ENCODE measurements at regions of chr10 and their contacts with region 1.

Region 1: GRCh38 chr10:92517034-92517655 is 56.7 kb downstream of the IDE start:
- DNase-seq: peak; percentile 26 to 90 (median 60)
- ATAC-seq: peak; percentile 98
- H3K4me3 ChIP-seq: no peak overlapping the region
- H3K4me3 Mint-ChIP-seq: no peak overlapping the region
- H3K27ac ChIP-seq: no peak overlapping the region
- H3K27ac Mint-ChIP-seq: no peak overlapping the region
- H3K4me1 ChIP-seq: no peaks in the 10 kb centered on the region
- H3K4me1 Mint-ChIP-seq: peaks cover 10% of the 10 kb centered on the region
- H3K27me3 ChIP-seq: no peaks in the 10 kb centered on the region
- H3K27me3 Mint-ChIP-seq: no peaks in the 10 kb centered on the region
- CTCF ChIP-seq: peak; percentile 77

Region 2: DNA sequence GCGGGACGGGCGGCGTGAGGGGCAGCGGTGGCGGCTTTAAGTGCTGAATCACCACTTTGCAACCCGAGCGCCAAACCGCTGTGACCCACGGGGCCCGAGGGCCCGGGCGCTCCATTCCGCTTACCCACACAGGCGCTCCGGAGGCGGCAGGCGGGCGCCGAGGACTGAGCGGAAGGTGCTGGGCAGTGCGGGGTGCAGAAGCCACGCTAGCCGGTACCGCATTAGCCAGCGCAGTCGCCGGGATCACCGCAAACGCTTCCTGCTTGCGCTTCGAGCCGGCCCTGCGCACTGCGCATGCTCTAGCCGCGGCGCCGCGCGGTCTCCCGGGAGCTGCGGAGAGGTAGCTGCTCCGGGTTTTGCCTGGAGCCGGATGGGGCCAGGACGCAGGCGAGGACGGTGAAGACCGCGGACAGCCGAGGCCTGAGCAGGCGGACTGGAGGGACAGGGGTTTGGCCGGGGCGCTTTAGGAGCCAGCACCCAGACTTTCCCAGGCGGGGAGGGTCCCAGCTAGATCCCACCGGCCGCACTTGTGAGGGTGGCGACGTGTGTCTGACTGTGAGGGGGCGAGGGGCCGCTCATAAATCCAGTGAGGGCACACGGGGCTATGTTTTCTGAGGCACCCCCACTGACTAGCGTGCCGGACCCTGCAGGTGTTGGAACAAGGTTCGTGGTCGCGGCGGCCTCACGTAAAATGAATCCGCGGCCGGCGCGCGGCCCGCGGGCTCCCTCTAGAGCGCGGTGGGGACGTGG is 56.8 kb after region 1 on chr10 and contains the start of gene IDE:
- CTCF ChIA-PET with region 1: interaction called, 108 read pairs
- POLR2A ChIA-PET with region 1: interaction called, 43 read pairs
- intact Hi-C with region 1: loop called (anchors 1 kb)
- DNase-seq: peak; percentile 64 to 91 (median 76)
- ATAC-seq: peak; percentile 73
- H3K4me3 ChIP-seq: peak within 1 kb of the TSS; percentile 96
- H3K4me3 Mint-ChIP-seq: peak within 1 kb of the TSS; percentile 93
- H3K27ac ChIP-seq: peak within 1 kb of the TSS; percentile 77
- H3K27ac Mint-ChIP-seq: peak within 1 kb of the TSS; percentile 88
- H3K4me1 ChIP-seq: peaks cover 19% of the 10 kb centered on the region
- H3K4me1 Mint-ChIP-seq: peaks cover 40% of the 10 kb centered on the region
- H3K27me3 ChIP-seq: no peaks in the 10 kb centered on the region
- H3K27me3 Mint-ChIP-seq: no peaks in the 10 kb centered on the region
- CTCF ChIP-seq: peak; percentile 91
- total RNA-seq, gene IDE: 15.2 to 17.8 TPM

Region 3: DNA sequence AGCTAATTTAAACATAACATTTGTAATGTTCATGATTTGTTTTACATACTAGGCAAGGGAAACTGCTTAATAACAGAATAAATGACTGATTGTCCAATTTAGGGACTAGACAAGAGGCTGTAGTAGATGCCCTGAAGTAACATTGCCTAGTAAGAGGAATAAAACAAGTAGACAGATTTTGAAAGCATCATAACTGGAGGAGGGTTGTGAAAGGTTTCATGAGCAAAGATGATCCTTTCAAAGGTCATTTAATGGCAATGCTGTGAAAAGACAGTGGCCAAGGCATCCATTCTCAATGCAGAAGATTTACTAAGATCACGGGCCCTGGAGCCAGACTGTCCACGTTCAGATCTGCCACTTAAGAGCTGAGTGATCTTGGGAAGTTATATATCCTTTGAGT is 127.8 kb after region 1 on chr10:
- CTCF ChIA-PET with region 1: interaction called, 3 read pairs
- POLR2A ChIA-PET with region 1: no interaction called
- intact Hi-C with region 1: loop called in 1 of 2 experiments (anchors 2 kb)
- DNase-seq: no peak
- ATAC-seq: no peak
- H3K4me3 ChIP-seq: no peak overlapping the region
- H3K4me3 Mint-ChIP-seq: no peak overlapping the region
- H3K27ac ChIP-seq: no peak overlapping the region
- H3K27ac Mint-ChIP-seq: no peak overlapping the region
- H3K4me1 ChIP-seq: no peaks in the 10 kb centered on the region
- H3K4me1 Mint-ChIP-seq: no peaks in the 10 kb centered on the region
- H3K27me3 ChIP-seq: no peaks in the 10 kb centered on the region
- H3K27me3 Mint-ChIP-seq: no peaks in the 10 kb centered on the region
- CTCF ChIP-seq: peak; percentile 9

Region 4: DNA sequence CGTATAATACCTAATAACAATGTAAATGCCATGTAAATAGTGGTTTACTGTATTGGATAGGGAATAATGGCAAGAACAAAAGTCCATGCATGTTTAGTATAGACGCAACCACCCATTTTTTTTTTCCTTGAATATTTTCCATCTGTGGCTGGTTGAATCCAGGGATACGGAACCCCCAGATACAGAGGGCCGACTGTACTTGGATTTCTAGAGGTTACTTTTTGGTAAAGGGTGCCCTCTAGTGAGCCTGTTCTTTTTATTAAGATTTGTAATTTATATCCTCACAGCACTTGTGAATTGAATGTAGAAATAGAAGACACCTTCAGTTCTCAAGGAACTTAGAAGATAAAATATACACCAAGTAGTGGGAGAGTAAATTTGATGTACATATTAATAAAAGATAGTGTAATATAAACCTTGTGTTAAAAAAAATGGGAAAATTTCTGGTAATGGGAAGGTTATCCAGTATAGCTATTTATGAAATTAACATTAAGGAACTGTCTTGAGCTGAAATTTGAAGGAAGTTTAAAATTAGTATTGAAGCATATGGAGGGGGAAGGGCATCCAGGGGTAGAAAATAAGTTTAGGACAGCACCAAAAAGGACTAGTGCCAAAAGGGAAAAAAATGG is 363.2 kb after region 1 on chr10:
- CTCF ChIA-PET with region 1: no interaction called
- POLR2A ChIA-PET with region 1: no interaction called
- intact Hi-C with region 1: loop called (anchors 1 to 2 kb)
- DNase-seq: peak in 4 of 14 experiments; percentile 13 to 56 (median 56)
- ATAC-seq: peak; percentile 39
- H3K4me3 ChIP-seq: no peak overlapping the region
- H3K4me3 Mint-ChIP-seq: no peak overlapping the region
- H3K27ac ChIP-seq: no peak overlapping the region
- H3K27ac Mint-ChIP-seq: no peak overlapping the region
- H3K4me1 ChIP-seq: peaks cover 5% of the 10 kb centered on the region
- H3K4me1 Mint-ChIP-seq: peaks cover 29% of the 10 kb centered on the region
- H3K27me3 ChIP-seq: no peaks in the 10 kb centered on the region
- H3K27me3 Mint-ChIP-seq: no peaks in the 10 kb centered on the region
- CTCF ChIP-seq: peak; percentile 75

Measured in CD4-positive, alpha-beta T cell (primary cell).